ENCODE measurements at regions of chr10 and their contacts with region 1.

Region 1: DNA sequence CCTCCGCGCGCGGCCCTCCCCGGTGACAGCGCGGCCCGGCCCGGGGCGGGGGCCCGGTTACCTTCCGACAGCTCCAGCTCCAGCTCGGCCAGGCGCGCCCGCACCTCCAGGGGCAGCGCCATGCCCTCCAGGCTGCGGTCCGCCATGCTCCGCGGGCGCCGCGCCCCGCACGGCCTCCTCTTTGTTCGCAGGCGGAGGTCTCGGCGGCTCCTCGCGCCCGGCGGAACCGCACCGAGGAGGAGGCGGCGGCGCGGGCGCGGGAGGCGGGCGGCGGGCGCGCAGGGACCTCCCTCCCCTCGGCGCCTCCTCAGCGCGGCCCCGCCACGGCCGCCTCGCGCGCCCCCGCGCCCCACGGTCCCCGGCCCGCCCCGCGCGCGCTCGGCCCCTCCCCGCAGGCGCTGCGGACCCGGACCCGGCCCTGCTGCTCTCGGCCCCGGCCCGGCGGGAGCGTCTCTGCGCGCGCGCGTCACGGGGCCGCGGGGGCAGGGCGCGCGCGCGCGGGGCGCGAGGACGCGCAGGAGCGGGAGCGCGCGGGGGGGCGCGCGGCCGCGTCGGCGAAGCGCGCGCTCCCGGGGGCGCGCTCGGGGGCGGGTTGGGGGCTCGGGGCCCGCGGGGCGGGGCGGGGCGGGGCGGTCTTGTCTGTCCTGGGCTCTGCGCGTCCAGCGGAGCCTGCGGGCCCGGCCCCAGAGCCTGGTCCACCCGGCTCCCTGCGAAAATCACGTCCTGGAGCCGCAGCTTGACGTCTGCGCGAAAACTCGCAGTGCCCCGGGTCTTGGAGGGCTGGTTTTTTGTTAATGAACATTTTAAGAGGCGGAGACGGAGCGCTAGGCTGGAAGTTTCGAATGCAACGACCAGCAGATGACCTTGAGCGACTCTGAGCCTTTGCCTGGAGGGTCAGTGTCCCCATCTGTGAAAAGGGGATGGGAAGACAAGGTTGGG is at the start of gene DIP2C:
- DNase-seq: peak; percentile 16
- ATAC-seq: peak; percentile 75
- H3K4me3 ChIP-seq: peak within 1 kb of the TSS; percentile 80 to 86 (median 86)
- H3K27ac ChIP-seq: peak within 1 kb of the TSS; percentile 58
- H3K4me1 ChIP-seq: peaks cover 29% of the 10 kb centered on the region
- H3K27me3 ChIP-seq: peaks cover 0 to 17% of the 10 kb centered on the region in 2 experiments; a peak in 3 of 5 replicates
- CTCF ChIP-seq: no peak
- EP300 ChIP-seq: no peak
- POLR2A ChIP-seq: no peak
- RAD21 ChIP-seq: no peak; the same call in 1 of the 2 replicates
- total RNA-seq, gene DIP2C: 2.2 and 2.7 TPM in 2 replicates

Region 2: GRCh38 chr10:784403-785088 is 94.8 kb after region 1 on chr10:
- CTCF ChIA-PET with region 1: no interaction called
- POLR2A ChIA-PET with region 1: no interaction called
- in situ Hi-C with region 1: no loop called
- intact Hi-C with region 1: loop called (anchors 5 kb)
- DNase-seq: no peak
- ATAC-seq: peak; percentile 50
- H3K4me3 ChIP-seq: peak overlapping the region; percentile 47 to 71 (median 54)
- H3K27ac ChIP-seq: no peak overlapping the region
- H3K4me1 ChIP-seq: peaks cover 37% of the 10 kb centered on the region
- H3K27me3 ChIP-seq: peaks cover 5 to 16% of the 10 kb centered on the region in 2 experiments; a peak in 3 of 5 replicates
- CTCF ChIP-seq: peak; percentile 40
- EP300 ChIP-seq: no peak
- POLR2A ChIP-seq: no peak
- RAD21 ChIP-seq: no peak

Measured in HepG2 (cell line).